AG04449 (cell line): ENCODE measurements at regions of chr5 and their contacts with region 1.

Region 1: GRCh38 chr5:113678924-113679575 is 165.6 kb downstream of the YTHDC2 start:
- DNase-seq: no peak
- H3K4me3 ChIP-seq: no peak overlapping the region
- CTCF ChIP-seq: peak; percentile 54

Region 2: GRCh38 chr5:113581388-113581787 is 97.7 kb before region 1 on chr5:
- CTCF ChIA-PET with region 1: no interaction called
- POLR2A ChIA-PET with region 1: no interaction called
- DNase-seq: no peak
- H3K4me3 ChIP-seq: no peak overlapping the region
- CTCF ChIP-seq: no peak

Region 3: GRCh38 chr5:114361724-114362196 is 682.7 kb after region 1 on chr5 and contains the start of gene KCNN2:
- CTCF ChIA-PET with region 1: interaction called, 17 read pairs
- POLR2A ChIA-PET with region 1: no interaction called
- DNase-seq: no peak
- H3K4me3 ChIP-seq: peak within 1 kb of the TSS; percentile 65
- CTCF ChIP-seq: no peak